AG04449 (cell line): ENCODE measurements at regions of chr17 and their contacts with region 1.

Region 1: DNA sequence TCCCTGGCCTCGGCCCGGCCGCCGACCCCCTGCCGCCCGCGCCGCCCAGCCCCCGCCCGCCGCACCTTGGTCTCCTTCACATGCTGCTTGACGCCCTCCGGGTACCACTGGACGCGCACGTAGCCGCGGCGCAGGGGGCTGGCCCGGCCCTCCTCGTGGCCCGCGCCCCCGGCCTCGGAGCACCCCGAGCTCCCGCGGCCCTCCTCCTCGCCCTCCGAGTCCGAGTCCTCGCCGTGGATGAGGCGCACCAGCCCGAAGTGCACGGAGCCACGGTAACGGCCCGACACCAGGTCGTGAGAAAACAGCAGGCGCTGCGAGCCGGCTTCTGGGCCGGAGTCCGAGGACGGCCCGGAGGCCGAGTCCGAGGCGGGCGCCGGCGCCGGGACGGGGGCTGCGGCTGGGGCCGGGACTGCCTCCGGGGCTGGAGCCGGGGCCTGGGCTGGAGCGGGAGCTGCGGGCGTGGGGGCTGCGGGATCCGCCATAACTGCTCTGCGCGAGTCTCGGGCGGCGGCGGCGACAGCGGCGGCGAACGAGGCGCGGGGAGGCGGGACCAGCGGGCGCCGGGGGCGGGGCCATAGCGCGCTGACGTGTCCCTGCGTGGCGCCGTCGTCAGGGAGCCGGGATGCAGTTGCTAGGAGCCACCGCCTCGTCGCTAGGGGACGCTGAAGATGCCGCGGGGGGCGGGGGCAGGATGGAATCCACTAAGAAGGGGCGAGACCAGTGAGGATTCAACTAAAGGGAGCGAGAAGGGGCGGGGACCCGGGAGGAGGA is at the start of gene UBE2O:
- DNase-seq: no peak
- H3K4me3 ChIP-seq: peak within 1 kb of the TSS; percentile 77
- CTCF ChIP-seq: peak; percentile 80

Region 2: DNA sequence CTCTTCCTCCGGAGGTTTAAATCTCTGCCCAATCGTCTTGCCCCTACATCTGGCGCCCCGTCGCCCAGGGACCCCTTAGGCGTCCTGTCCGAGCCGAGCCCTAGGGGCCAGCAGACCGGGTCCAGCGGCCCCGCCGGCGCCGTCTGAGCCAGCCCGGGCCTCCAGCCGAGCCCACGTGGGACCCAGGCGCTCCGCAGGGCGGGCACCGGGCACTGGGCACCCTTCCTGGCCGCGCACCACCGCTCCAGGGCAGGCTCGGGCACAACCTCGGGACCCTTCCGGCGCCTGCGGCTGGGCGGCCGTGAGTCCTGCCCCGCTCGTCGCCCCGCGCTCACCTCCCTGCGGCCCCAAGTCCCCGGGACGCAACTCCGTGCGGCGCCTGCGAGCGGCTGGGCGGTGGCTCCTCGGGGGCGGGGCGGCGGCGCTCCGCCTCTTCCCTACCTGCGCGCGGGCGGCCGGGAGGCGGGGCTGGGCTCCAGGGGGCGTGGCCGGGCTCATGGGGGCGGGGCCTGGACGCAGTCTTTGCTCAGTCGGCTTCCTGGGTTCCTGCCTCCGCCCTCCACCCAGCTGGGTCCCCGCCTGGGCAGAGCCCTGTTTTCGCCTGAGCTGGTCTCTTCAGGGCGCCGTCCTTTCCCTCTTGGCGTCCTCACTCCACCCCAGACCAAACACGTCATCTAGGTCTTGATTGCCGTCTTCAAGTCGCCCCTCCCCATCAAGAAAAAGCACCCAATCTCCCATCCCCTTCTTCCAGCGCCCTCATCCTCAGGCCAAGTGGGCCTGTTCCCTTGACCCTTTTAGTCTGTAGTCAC is 48.4 kb after region 1 on chr17 and contains the start of gene RHBDF2:
- CTCF ChIA-PET with region 1: interaction called, 1,209 read pairs
- POLR2A ChIA-PET with region 1: no interaction called
- DNase-seq: no peak
- H3K4me3 ChIP-seq: peak within 1 kb of the TSS; percentile 66
- CTCF ChIP-seq: no peak